Posterior vena cava (tissue), 2 donors: ENCODE measurements at regions of chr21 and their contacts with region 1.

Region 1: DNA sequence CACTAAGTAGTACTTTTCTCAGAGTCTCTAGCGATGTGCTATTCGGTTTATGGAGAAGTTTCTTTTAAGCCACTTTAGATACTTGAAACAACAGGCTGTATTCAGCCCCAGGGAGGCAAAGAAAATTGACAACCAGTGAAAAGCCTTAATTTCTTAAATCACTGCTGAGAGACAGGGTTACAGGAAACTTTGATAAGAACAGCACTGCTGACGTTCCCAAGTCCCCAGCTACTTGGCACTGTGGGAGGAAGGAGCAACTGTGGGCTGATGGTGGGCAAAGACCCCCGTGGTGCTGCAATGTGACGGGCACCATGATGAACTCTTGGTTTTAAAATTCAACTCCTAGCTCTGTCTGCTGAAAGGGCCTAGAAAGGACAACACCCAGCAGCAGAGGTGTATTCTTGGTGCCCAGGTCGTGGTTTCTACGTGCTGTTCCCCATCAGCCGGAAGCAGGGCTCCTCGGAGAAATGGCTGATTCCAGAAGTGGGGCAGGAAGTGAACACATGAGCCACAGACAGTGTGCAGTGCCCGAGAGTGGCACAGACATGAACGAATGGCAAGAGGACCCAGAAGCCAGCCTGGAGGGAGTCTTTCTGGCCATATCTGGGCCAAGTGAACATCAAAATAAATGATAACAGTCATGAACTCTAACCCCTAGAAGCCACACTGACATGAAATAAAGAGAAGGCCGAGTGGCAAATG is 5.3 kb downstream of the PTTG1IP start:
- DNase-seq: peak; percentile 66

Region 2: GRCh38 chr21:44817506-44817880 is 50.7 kb before region 1 on chr21:
- intact Hi-C with region 1: no loop called
- DNase-seq: peak; percentile 98

Region 3: GRCh38 chr21:44846485-44847275 is 21.5 kb before region 1 on chr21:
- intact Hi-C with region 1: loop called in 1 of 2 experiments (anchors 1 kb)
- DNase-seq: peak; percentile 91

Region 4: GRCh38 chr21:44907966-44908895 is 40.1 kb after region 1 on chr21:
- intact Hi-C with region 1: no loop called
- DNase-seq: peak; percentile 92